ENCODE measurements at regions of chr17 and their contacts with region 1.

Region 1: DNA sequence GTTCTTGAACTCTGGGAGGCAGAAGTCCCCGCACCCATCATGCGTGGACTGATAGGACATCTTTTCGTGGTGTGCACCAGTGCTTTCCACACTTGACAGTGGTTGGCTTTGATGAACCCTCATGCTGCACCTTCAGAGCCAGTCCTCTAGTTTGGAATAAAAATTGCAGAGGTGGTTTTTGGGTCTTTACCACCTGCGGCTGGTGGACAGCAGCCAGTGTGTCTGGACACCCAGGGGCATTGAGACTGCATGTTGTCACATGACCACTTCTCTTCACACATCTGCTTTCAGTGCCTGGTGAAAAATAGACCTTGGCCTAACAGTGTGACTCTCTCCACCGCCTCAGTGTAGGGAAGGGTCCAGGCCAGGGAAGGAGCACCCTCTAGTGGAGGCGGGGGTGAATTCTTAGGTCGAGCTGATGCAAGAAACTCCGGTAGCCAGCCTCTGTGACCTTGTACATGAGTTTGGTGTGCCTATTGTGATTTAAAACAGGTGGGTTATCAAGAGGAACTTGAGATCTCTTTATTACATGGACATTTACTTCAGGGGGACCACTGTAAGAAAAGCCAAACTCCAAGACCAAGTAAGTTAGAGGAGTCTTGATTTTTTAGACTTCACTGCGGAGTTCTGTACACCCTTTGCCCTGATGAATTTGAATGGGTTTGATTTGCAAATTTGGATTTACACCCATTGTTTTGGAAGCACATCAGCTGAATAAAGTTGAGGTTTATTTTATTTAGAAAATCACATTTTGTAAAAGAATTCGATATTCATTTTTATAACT is 17.9 kb downstream of the GOSR2 start:
- DNase-seq: peak; percentile 87
- ATAC-seq: peak; percentile 79
- H3K4me3 Mint-ChIP-seq: no peak overlapping the region
- H3K27ac Mint-ChIP-seq: peak overlapping the region; percentile 83
- H3K4me1 Mint-ChIP-seq: peaks cover 22% of the 10 kb centered on the region
- H3K27me3 Mint-ChIP-seq: no peaks in the 10 kb centered on the region
- CTCF ChIP-seq: peak; percentile 85

Region 2: DNA sequence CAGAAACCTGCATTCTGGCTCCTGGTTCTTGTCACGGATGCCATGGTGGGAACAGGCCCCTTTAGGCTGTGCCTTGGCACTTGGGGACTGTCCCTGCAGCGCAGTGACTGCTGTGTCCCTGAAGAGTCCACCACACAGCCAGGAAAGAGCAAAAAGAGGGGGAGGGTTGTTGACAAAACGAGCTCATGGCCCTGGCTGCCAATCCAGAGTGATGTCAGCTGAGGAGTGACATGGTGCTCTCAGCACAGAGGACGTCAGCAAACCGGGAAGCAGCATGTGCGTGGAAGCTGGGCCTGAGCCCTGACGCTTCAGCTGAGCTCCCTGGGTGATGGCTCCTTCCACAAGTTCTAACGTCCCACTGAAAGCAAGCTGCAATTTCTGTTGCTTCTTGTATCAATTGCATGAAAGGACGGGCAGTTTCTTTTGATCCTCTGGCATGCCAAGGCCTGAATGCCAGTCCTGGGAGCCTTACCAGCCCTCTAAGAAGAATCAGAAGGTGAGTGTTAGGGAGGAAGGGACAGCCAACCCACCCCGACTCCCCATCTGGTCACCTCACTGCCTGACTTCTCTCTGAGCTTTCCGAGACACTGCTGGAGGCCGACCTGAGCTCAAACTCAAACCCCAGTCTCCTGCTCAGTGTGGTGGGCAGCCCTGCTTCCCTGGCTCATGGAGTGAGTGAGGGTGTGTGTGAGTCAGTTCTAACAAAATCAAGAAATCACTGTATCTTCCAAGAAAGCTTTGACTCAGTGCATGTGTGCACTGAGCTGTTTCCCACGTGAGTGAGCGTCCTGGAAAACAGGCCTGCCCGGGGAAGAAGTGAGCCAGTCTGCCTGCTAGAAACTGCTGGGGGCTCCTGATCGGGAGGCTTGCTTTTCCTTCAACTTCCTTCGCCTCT is 107.6 kb before region 1 on chr17:
- CTCF ChIA-PET with region 1: interaction called, 15 read pairs
- POLR2A ChIA-PET with region 1: no interaction called
- intact Hi-C with region 1: no loop called
- DNase-seq: no peak
- ATAC-seq: no peak
- H3K4me3 Mint-ChIP-seq: no peak overlapping the region
- H3K27ac Mint-ChIP-seq: no peak overlapping the region
- H3K4me1 Mint-ChIP-seq: peaks cover 2% of the 10 kb centered on the region
- H3K27me3 Mint-ChIP-seq: peaks cover 16% of the 10 kb centered on the region
- CTCF ChIP-seq: no peak

Region 3: GRCh38 chr17:46841561-46842379 is 99.0 kb before region 1 on chr17:
- CTCF ChIA-PET with region 1: interaction called, 45 read pairs
- POLR2A ChIA-PET with region 1: no interaction called
- intact Hi-C with region 1: loop called (anchors 5 kb)
- DNase-seq: peak; percentile 37
- ATAC-seq: peak; percentile 51
- H3K4me3 Mint-ChIP-seq: no peak overlapping the region
- H3K27ac Mint-ChIP-seq: no peak overlapping the region
- H3K4me1 Mint-ChIP-seq: no peaks in the 10 kb centered on the region
- H3K27me3 Mint-ChIP-seq: peaks cover 33% of the 10 kb centered on the region
- CTCF ChIP-seq: peak; percentile 89

Region 4: DNA sequence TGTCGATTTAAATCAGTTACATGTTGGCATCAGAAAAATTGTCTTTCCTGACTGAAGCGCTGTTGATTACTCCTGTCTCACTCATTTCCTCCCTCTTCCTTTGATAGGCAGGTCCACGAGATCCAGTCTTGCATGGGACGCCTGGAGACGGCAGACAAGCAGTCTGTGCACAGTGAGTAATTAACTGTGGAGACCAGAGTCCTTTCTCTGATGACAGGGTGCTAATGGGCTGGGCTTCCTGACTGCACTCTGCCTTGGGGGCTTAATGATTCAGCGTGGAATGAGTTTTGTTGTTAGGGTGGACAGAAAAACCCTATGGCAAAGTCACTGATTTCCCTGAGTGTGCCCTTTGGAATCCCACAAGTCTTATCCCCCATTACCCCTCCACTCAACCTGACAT is 11.4 kb before region 1 on chr17:
- CTCF ChIA-PET with region 1: interaction called, 18 read pairs
- POLR2A ChIA-PET with region 1: interaction called, 3 read pairs
- intact Hi-C with region 1: no loop called
- DNase-seq: no peak
- ATAC-seq: no peak
- H3K4me3 Mint-ChIP-seq: no peak overlapping the region
- H3K27ac Mint-ChIP-seq: no peak overlapping the region
- H3K4me1 Mint-ChIP-seq: peaks cover 46% of the 10 kb centered on the region
- H3K27me3 Mint-ChIP-seq: no peaks in the 10 kb centered on the region
- CTCF ChIP-seq: no peak

Region 5: DNA sequence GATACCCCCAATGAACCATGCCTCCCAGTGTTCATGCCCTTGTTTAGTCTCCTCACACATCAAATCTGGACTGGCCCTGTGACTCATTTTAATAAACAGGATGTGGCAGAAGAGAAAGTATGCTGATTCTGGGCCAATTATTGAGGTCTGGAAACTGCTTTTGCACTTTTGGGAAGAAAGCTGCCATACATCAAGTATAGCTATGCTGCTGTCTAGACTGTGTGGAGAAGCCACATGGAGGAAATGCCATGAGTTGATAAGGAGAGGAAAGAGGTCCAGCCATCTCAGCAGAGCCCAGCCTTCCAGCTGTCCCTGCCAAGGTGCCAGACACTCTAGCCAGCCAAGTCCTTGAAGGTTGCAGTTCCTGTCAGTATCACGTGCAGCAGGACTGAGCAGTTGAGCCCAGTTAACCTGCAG is 21.6 kb after region 1 on chr17:
- CTCF ChIA-PET with region 1: interaction called, 38 read pairs
- POLR2A ChIA-PET with region 1: no interaction called
- intact Hi-C with region 1: no loop called
- DNase-seq: no peak
- ATAC-seq: peak; percentile 55
- H3K4me3 Mint-ChIP-seq: no peak overlapping the region
- H3K27ac Mint-ChIP-seq: no peak overlapping the region
- H3K4me1 Mint-ChIP-seq: peaks cover 5% of the 10 kb centered on the region
- H3K27me3 Mint-ChIP-seq: no peaks in the 10 kb centered on the region
- CTCF ChIP-seq: no peak

Region 6: GRCh38 chr17:46995841-46996571 is 55.2 kb after region 1 on chr17:
- CTCF ChIA-PET with region 1: interaction called, 25 read pairs
- POLR2A ChIA-PET with region 1: interaction called, 4 read pairs
- intact Hi-C with region 1: loop called (anchors 5 kb)
- DNase-seq: no peak
- ATAC-seq: no peak
- H3K4me3 Mint-ChIP-seq: no peak overlapping the region
- H3K27ac Mint-ChIP-seq: no peak overlapping the region
- H3K4me1 Mint-ChIP-seq: no peaks in the 10 kb centered on the region
- H3K27me3 Mint-ChIP-seq: no peaks in the 10 kb centered on the region
- CTCF ChIP-seq: no peak

Region 7: DNA sequence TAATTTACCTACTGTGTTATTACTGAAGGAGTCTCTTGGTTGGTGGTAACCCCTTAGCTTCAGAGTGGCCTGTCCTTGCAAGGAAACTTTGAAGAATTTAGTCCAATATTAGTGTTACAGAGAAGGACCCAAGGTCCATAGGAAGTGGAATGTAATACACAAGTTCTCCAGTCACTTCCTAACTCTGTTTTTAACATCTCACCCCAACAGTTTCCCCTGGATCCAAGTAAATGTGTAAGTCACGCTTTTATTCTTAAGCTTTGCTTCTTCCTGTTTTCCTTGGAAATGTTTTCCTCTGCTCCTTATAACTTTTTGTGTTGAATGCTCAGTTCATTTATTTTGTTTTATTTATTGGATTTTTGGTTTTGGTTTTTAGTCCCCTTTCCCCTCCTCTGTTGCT is 64.1 kb after region 1 on chr17:
- CTCF ChIA-PET with region 1: interaction called, 25 read pairs
- POLR2A ChIA-PET with region 1: no interaction called
- intact Hi-C with region 1: loop called (anchors 5 kb)
- DNase-seq: no peak
- ATAC-seq: no peak
- H3K4me3 Mint-ChIP-seq: no peak overlapping the region
- H3K27ac Mint-ChIP-seq: no peak overlapping the region
- H3K4me1 Mint-ChIP-seq: peaks cover 5% of the 10 kb centered on the region
- H3K27me3 Mint-ChIP-seq: no peaks in the 10 kb centered on the region
- CTCF ChIP-seq: no peak

Measured in activated CD8-positive, alpha-beta T cell treated with anti-CD3 and anti-CD28 coated beads for 36 hours (primary cell).